MCF 10A (cell line): ENCODE measurements at regions of chr17 and their contacts with region 1.

Region 1: GRCh38 chr17:72556944-72557826 is 436.4 kb downstream of the SOX9 start:
- DNase-seq: peak; percentile 81
- H3K4me3 Mint-ChIP-seq: no peak overlapping the region
- H3K27ac Mint-ChIP-seq: no peak overlapping the region
- H3K4me1 Mint-ChIP-seq: peaks cover 21% of the 10 kb centered on the region
- H3K27me3 Mint-ChIP-seq: no peaks in the 10 kb centered on the region
- CTCF ChIP-seq: peak; percentile 85

Region 2: DNA sequence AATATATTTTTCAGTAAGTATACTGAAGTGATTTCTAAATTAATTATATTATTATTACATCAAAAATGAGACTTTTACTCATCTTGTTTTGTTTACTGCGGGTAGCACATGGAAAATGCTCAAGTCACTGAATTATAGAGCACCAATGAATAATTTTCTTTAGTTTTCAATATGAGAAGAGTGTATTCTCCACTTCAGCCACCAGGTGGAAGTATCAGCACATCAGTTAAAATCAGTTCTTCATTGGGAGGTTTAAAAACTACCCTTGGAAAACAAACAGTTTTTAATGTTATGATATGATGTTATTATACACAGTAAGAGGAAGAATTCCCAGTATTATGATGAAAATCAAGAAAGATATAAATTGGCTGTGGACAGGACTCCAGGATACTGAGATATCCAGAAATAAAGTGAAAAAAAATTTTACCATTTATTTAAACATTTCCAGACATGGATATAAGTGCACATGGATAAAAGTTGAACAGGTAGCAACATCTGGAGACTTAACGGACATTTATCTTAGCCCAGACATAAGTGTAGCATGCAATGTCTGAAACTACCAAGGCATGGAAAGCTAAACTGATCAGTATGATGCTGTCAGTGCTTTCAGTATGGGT is 1920.6 kb before region 1 on chr17:
- CTCF ChIA-PET with region 1: no interaction called
- POLR2A ChIA-PET with region 1: no interaction called
- intact Hi-C with region 1: loop called (anchors 10 kb)
- DNase-seq: peak; percentile 63
- H3K4me3 Mint-ChIP-seq: no peak overlapping the region
- H3K27ac Mint-ChIP-seq: no peak overlapping the region
- H3K4me1 Mint-ChIP-seq: no peaks in the 10 kb centered on the region
- H3K27me3 Mint-ChIP-seq: peaks cover 61% of the 10 kb centered on the region
- CTCF ChIP-seq: peak; percentile 71

Region 3: GRCh38 chr17:72430611-72431432 is 126.4 kb before region 1 on chr17:
- CTCF ChIA-PET with region 1: no interaction called
- POLR2A ChIA-PET with region 1: no interaction called
- intact Hi-C with region 1: no loop called
- DNase-seq: peak; percentile 58
- H3K4me3 Mint-ChIP-seq: peak overlapping the region; percentile 38
- H3K27ac Mint-ChIP-seq: peak overlapping the region; percentile 78
- H3K4me1 Mint-ChIP-seq: peaks cover 33% of the 10 kb centered on the region
- H3K27me3 Mint-ChIP-seq: no peaks in the 10 kb centered on the region
- CTCF ChIP-seq: peak; percentile 32

Region 4: DNA sequence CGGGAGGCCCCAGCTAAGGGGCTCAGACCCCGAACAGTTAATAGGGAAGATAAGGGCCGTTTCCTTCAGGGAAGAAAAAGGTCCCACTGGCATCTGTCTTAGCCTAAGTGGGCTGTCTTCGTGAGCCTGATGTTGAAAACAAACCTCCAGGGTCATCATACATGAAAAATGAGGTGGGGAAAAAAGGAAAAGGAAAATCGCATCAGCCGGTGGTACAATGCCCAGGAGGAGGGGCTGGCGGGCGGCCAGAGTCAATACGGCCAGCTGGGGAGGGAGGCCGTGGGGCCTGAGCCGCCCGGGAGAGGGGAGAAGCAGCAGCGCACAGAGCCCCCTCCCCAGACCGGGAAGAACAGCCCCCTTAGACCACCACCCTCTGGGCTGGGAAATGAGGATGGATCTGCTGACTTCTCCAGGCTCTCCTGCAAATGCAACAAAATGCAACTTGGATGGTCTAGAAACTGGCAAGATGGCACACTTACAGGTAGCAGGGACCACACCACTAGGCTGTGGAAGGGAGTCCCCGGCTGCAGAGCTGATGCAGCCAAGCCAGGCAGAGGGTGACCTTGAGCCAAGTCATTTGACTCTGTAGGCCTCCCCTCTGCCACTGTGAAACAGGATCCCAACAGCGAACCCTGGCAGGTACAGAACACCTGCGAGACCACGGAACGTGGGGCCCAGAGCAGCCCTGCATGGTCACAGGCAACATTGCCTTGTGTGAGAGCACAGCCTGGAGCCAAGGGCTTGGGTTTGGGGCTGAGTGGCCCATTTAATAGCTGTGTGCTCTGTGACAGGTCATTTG is 12.2 kb after region 1 on chr17:
- CTCF ChIA-PET with region 1: interaction called, 11 read pairs
- POLR2A ChIA-PET with region 1: no interaction called
- intact Hi-C with region 1: no loop called
- DNase-seq: no peak
- H3K4me3 Mint-ChIP-seq: no peak overlapping the region
- H3K27ac Mint-ChIP-seq: no peak overlapping the region
- H3K4me1 Mint-ChIP-seq: peaks cover 47% of the 10 kb centered on the region
- H3K27me3 Mint-ChIP-seq: no peaks in the 10 kb centered on the region
- CTCF ChIP-seq: no peak

Region 5: DNA sequence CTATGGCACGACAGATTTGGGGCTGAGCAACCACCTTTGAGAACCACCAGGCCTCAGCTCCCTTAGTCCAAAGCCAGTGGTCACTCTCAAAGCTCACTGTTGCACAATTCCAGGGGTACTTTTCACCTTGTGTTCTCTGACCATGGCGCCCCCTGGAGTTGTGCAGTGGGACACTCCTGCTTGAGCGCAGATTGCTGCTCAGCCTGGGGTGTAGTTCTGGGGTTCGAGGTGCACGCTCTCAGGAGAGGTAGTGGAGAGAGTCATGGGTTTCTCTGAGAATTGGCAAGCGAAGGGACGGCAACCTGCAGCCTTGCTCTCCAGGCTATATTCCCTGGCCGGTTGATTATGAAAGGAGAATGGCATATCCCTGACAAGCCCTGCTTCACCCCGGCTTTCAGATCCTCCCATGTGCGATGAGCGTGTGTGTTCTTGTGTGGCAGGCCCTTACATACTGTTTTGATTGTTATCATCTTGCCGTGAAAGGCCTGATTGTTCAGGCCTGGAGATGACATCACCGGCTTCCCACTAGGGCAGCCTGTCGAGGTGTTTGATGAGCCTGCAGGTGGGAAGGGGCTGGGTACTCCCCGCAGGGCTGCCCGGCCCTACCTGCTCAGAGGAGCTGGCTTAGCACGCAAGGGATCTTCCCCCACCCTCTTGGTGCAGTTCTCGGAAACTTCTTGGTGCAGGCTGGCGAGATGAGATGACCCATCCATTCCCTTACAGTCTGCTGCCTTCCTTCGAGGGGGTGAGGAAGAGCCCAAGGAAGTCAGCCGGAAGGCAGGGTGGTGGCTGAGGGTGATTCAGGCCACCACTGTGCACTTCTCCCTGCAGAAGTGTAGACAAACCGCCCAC is 104.1 kb after region 1 on chr17:
- CTCF ChIA-PET with region 1: interaction called, 15 read pairs
- POLR2A ChIA-PET with region 1: interaction called, 3 read pairs
- intact Hi-C with region 1: loop called (anchors 2 kb)
- DNase-seq: peak; percentile 78
- H3K4me3 Mint-ChIP-seq: no peak overlapping the region
- H3K27ac Mint-ChIP-seq: peak overlapping the region; percentile 78
- H3K4me1 Mint-ChIP-seq: peaks cover 15% of the 10 kb centered on the region
- H3K27me3 Mint-ChIP-seq: no peaks in the 10 kb centered on the region
- CTCF ChIP-seq: peak; percentile 43

Region 6: DNA sequence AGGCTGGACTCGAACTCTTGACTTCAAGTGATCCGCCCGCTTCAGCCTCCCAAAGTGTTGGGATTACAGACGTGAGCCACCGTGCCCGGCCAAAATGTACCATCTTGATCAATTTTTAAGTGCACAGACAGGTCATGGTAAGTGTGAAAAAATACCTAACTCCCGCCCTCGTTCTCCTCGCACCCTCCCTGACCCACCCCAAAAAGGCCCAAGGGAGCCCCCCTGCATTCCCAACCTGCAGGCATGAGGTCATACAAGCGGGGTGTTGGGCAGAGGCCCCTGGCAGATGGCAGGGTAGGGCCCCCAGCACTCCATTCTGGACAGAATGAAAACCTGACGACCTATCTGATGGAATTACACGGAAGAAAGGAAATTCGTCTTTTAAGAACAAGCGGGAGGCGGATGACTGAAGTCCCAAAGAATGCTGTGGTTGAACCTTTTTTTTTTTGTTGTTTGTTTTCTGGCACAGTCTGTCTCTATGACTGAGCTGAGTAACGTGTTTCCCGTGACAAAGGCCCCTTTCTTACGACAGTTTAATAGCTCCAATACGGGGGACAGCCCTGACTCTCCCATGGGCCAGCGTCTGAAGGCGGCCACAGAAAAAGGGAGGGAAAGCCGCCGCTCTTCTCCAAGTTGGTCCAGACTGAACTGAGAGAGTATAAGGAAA is 158.9 kb after region 1 on chr17:
- CTCF ChIA-PET with region 1: interaction called, 12 read pairs
- POLR2A ChIA-PET with region 1: interaction called, 3 read pairs
- intact Hi-C with region 1: loop called (anchors 2 kb)
- DNase-seq: peak; percentile 92
- H3K4me3 Mint-ChIP-seq: peak overlapping the region; percentile 72
- H3K27ac Mint-ChIP-seq: peak overlapping the region; percentile 100
- H3K4me1 Mint-ChIP-seq: peaks cover 29% of the 10 kb centered on the region
- H3K27me3 Mint-ChIP-seq: no peaks in the 10 kb centered on the region
- CTCF ChIP-seq: no peak

Region 7: GRCh38 chr17:72985881-72986720 is 428.9 kb after region 1 on chr17:
- CTCF ChIA-PET with region 1: interaction called, 3 read pairs
- POLR2A ChIA-PET with region 1: no interaction called
- intact Hi-C with region 1: loop called (anchors 5 kb)
- DNase-seq: peak; percentile 82
- H3K4me3 Mint-ChIP-seq: no peak overlapping the region
- H3K27ac Mint-ChIP-seq: no peak overlapping the region
- H3K4me1 Mint-ChIP-seq: no peaks in the 10 kb centered on the region
- H3K27me3 Mint-ChIP-seq: no peaks in the 10 kb centered on the region
- CTCF ChIP-seq: peak; percentile 84